Naive thymus-derived CD4-positive, alpha-beta T cell (primary cell): ENCODE measurements at regions of chr1 and their contacts with region 1.

Region 1: DNA sequence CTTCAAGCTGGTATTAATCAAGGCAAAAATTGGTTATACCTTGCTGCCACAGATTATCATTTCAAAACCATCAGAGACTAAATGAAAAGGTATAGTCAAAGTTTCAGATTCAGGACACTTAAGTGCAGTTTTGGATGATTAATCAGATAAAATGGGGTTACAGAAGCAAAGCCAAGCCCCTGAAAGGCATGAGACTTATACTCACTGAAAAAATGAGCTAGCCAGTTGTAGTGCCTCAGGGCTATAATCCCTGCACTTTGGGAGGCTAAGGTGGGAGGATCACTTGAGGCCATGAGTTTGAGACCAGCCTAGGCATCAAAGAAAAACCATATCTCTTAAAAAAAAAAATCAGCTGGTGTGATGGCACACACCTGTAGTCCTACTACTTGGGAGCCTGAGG is 15.2 kb downstream of the LRRC40 start:
- DNase-seq: no peak
- ATAC-seq: no peak
- H3K4me3 ChIP-seq: no peak overlapping the region
- H3K4me3 Mint-ChIP-seq: no peak overlapping the region
- H3K27ac ChIP-seq: no peak overlapping the region
- H3K27ac Mint-ChIP-seq: no peak overlapping the region
- H3K4me1 ChIP-seq: no peaks in the 10 kb centered on the region
- H3K4me1 Mint-ChIP-seq: peaks cover 2 to 26% (median 16%) of the 10 kb centered on the region in 7 donors
- H3K27me3 ChIP-seq: no peaks in the 10 kb centered on the region
- H3K27me3 Mint-ChIP-seq: no peaks in the 10 kb centered on the region

Region 2: DNA sequence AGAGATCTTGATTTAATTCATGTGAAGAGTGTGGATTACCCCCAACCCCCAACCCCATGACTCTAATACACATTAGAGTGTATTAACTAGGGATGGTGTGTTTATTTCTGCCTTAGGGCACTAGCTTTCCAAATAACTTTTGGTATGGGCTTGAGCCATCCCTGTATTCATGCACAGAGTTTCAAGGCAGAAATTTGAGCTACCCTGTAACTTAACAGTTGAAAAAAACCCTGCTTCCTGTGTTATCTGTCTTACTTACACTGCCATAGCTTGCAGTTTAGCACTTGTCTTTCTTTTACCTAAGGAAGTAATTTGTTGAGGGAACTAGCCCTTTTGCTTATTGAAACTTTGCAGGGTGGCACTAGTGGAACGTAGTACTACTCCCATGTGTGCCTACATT is 37.3 kb after region 1 on chr1:
- CTCF ChIA-PET with region 1: no interaction called
- POLR2A ChIA-PET with region 1: no interaction called
- intact Hi-C with region 1: loop called in 1 of 2 experiments (anchors 5 kb)
- DNase-seq: no peak
- ATAC-seq: peak; percentile 66
- H3K4me3 ChIP-seq: no peak overlapping the region
- H3K4me3 Mint-ChIP-seq: peak overlapping the region in 8 of 10 donors; percentile 1 to 63 (median 39)
- H3K27ac ChIP-seq: no peak overlapping the region
- H3K27ac Mint-ChIP-seq: peak overlapping the region in 6 of 9 donors; percentile 33 to 81 (median 46)
- H3K4me1 ChIP-seq: peaks cover 22 to 38% of the 10 kb centered on the region in 2 donors
- H3K4me1 Mint-ChIP-seq: peaks cover 37 to 73% (median 56%) of the 10 kb centered on the region in 7 donors
- H3K27me3 ChIP-seq: no peaks in the 10 kb centered on the region
- H3K27me3 Mint-ChIP-seq: no peaks in the 10 kb centered on the region